CD4-positive, alpha-beta T cell (primary cell): ENCODE measurements at regions of chr2 and their contacts with region 1.

Region 1: DNA sequence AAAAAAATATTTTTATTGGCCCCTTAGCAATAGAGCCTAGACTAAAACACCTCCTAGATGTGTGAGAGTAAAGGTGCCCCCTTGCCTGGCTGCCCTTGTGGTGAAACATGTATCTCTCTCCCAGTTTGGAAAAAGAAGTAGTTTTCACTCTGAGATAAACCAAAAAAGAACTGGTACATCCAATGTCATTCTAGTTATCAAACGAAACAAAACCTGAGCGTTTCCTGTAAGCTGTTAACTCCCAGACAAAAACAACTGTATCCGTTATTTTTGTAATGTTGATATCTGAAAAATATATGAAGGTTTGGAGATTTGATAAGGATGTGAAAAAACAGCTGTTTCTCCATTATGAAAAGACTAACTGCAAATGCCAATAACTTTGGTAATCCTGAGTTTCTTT is 24.3 kb downstream of the HEATR5B start:
- DNase-seq: no peak
- ATAC-seq: no peak
- H3K4me3 ChIP-seq: no peak overlapping the region
- H3K4me3 Mint-ChIP-seq: no peak overlapping the region
- H3K27ac ChIP-seq: no peak overlapping the region
- H3K27ac Mint-ChIP-seq: no peak overlapping the region
- H3K4me1 ChIP-seq: no peaks in the 10 kb centered on the region
- H3K4me1 Mint-ChIP-seq: no peaks in the 10 kb centered on the region
- H3K27me3 ChIP-seq: no peaks in the 10 kb centered on the region
- H3K27me3 Mint-ChIP-seq: no peaks in the 10 kb centered on the region
- CTCF ChIP-seq: no peak

Region 2: DNA sequence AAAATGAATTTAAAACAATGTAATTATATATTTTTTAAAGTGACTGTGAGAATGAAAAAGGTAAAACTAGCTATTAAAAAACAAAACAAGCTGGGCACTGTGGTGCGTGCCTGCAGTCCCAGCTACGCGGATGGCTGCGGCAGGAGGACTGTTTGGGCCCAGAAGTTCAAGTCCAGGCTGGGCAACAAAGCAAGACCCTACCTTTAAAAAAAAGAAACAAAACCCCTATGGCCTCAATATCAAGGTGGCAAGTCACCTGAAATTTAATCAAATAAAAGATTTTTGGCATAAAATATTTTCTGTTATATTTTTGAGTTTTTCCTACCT is 46.6 kb before region 1 on chr2:
- CTCF ChIA-PET with region 1: interaction called, 3 read pairs
- POLR2A ChIA-PET with region 1: no interaction called
- intact Hi-C with region 1: loop called in 1 of 2 experiments (anchors 5 kb)
- DNase-seq: no peak
- ATAC-seq: no peak
- H3K4me3 ChIP-seq: no peak overlapping the region
- H3K4me3 Mint-ChIP-seq: no peak overlapping the region
- H3K27ac ChIP-seq: no peak overlapping the region
- H3K27ac Mint-ChIP-seq: peak overlapping the region; percentile 16
- H3K4me1 ChIP-seq: no peaks in the 10 kb centered on the region
- H3K4me1 Mint-ChIP-seq: peaks cover 29% of the 10 kb centered on the region
- H3K27me3 ChIP-seq: no peaks in the 10 kb centered on the region
- H3K27me3 Mint-ChIP-seq: no peaks in the 10 kb centered on the region
- CTCF ChIP-seq: no peak

Region 3: DNA sequence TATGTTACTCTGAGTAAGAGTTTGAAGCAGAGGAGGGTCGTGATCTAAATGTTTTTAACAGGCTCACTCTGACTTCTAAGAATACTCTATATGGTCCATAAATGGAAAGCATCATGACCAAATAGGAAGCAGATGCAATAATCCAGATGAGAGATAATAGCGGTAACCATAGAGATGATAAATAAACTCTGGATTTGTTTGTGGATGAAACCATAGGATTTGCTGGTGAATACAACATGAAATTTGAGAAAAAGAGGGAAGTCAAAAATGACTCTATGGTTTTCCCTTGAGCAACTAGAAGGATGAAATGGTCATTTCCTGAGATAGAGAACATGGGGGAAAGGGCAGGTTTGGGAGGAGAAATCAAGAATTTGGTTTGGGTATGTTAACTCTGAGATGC is 20.4 kb after region 1 on chr2:
- CTCF ChIA-PET with region 1: no interaction called
- POLR2A ChIA-PET with region 1: no interaction called
- intact Hi-C with region 1: no loop called
- DNase-seq: no peak
- ATAC-seq: no peak
- H3K4me3 ChIP-seq: peak overlapping the region; percentile 14
- H3K4me3 Mint-ChIP-seq: peak overlapping the region; percentile 63
- H3K27ac ChIP-seq: peak overlapping the region; percentile 5 to 31
- H3K27ac Mint-ChIP-seq: peak overlapping the region; percentile 74
- H3K4me1 ChIP-seq: peaks cover 33% of the 10 kb centered on the region
- H3K4me1 Mint-ChIP-seq: peaks cover 30% of the 10 kb centered on the region
- H3K27me3 ChIP-seq: no peaks in the 10 kb centered on the region
- H3K27me3 Mint-ChIP-seq: no peaks in the 10 kb centered on the region
- CTCF ChIP-seq: no peak

Region 4: DNA sequence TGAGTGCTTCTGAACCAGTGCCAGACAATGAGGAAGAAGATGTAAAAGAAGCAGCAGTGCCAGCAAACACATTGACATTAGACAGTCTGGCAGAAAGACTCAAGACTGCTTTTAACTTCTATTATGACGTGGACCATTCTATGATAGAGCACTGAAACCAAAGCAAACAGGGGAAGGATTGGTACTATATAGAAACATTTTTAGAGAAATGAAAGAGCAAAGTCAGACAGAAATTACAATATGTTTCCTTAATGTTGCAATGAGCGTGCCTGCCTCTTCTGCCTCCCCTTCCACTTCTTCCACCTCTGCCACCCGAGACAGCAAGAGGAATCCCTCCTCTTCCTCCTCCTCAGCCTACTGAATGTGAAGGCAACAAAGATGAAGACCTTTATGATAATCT is 1776.1 kb after region 1 on chr2:
- CTCF ChIA-PET with region 1: no interaction called
- POLR2A ChIA-PET with region 1: no interaction called
- intact Hi-C with region 1: no loop called
- DNase-seq: peak in 3 of 14 experiments; percentile 19 to 38 (median 34)
- ATAC-seq: no peak
- H3K4me3 ChIP-seq: no peak overlapping the region
- H3K4me3 Mint-ChIP-seq: no peak overlapping the region
- H3K27ac ChIP-seq: no peak overlapping the region
- H3K27ac Mint-ChIP-seq: no peak overlapping the region
- H3K4me1 ChIP-seq: no peaks in the 10 kb centered on the region
- H3K4me1 Mint-ChIP-seq: no peaks in the 10 kb centered on the region
- H3K27me3 ChIP-seq: no peaks in the 10 kb centered on the region
- H3K27me3 Mint-ChIP-seq: no peaks in the 10 kb centered on the region
- CTCF ChIP-seq: no peak